PC-9 (cell line): ENCODE measurements at regions of chr22 and their contacts with region 1.

Region 1: DNA sequence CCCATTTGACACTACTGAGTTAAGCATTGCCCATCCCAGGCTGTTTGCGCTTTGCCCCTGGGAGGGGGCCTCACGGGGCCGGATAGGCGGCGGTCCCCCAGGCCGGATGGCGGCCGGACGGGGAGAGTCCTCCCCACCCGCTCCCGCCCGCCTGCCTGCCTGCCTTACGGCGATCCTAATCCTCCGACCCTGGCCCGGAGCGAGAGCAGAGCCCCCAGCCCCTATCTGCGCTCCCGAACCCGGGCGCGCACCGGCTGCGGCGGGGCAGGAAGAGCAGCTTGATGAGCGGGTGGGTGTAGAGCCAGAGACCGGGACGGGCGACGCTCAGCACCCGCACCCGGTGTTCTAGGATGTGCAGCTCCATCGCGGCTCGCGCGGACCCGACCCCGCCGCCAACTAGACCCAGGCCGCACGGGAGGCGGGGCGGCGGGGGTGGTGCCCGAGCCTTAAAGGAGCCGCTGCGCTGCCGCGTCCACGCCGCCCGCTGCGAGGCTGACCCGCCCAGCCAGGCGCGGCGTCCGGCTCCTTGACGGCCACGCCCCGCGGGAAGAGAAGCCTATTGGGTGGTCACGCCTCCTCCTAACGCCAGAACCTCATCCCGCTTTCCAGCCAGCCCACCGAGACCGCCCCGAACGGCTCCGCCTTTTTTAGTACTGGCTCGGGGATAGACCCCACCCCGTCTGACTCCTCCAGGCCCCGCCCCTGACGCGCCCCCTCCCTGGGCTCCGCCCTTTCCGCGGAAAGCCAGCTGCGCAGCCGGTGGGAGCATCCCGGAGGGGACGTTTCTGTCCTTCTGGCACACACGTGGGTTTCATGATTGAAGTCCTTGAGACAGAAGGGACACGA is at the start of gene CASTOR1:
- DNase-seq: peak; percentile 85 to 94
- H3K4me3 ChIP-seq: peak within 1 kb of the TSS; percentile 87
- H3K27ac ChIP-seq: peak within 1 kb of the TSS; percentile 44
- H3K4me1 ChIP-seq: peaks cover 32% of the 10 kb centered on the region
- H3K27me3 ChIP-seq: no peaks in the 10 kb centered on the region
- CTCF ChIP-seq: no peak
- total RNA-seq, gene CASTOR1: 10.6 and 11.1 TPM in 2 replicates

Region 2: GRCh38 chr22:30310881-30311771 is 21.8 kb after region 1 on chr22:
- CTCF ChIA-PET with region 1: interaction called, 4 read pairs
- POLR2A ChIA-PET with region 1: interaction called, 6 read pairs
- intact Hi-C with region 1: loop called (anchors 2 kb)
- DNase-seq: peak; percentile 67 to 68
- H3K4me3 ChIP-seq: peak overlapping the region; percentile 30; the same call in 1 of the 2 replicates
- H3K27ac ChIP-seq: peak overlapping the region; percentile 76
- H3K4me1 ChIP-seq: peaks cover 93% of the 10 kb centered on the region
- H3K27me3 ChIP-seq: no peaks in the 10 kb centered on the region
- CTCF ChIP-seq: no peak

Region 3: GRCh38 chr22:30356449-30357235 is 67.3 kb after region 1 on chr22 and contains the starts of genes CCDC157 and SF3A1:
- CTCF ChIA-PET with region 1: interaction called, 5 read pairs
- POLR2A ChIA-PET with region 1: interaction called, 7 read pairs
- intact Hi-C with region 1: loop called (anchors 2 kb)
- DNase-seq: peak; percentile 80 to 84
- H3K4me3 ChIP-seq: peak within 1 kb of the TSS; percentile 90
- H3K27ac ChIP-seq: peak within 1 kb of the TSS; percentile 74
- H3K4me1 ChIP-seq: peaks cover 18% of the 10 kb centered on the region
- H3K27me3 ChIP-seq: no peaks in the 10 kb centered on the region
- CTCF ChIP-seq: no peak; the same call in 1 of the 2 replicates
- total RNA-seq, gene CCDC157: 6.2 and 6.8 TPM in 2 replicates
- total RNA-seq, gene SF3A1: 189 and 207 TPM in 2 replicates

Region 4: DNA sequence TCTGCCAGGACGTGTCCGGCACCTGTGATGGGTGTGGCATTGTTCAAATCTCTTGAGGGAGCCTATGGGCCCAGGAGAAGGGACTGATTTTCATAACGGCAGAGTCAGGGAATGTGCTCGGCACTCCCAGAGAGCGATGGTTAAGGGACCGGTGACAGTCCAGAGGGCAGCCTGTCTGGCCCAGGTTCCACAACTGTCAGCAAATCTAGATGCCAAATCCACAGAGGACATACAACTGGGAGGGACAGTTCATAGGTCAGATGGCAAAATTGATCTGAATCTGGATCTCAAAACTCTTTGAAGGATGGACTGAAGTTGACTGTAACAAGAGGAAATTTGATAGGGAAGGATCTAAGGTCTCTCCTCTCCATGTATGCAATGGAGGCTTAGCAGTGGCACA is 115.0 kb after region 1 on chr22:
- CTCF ChIA-PET with region 1: no interaction called
- POLR2A ChIA-PET with region 1: no interaction called
- intact Hi-C with region 1: no loop called
- DNase-seq: no peak
- H3K4me3 ChIP-seq: no peak overlapping the region
- H3K27ac ChIP-seq: no peak overlapping the region
- H3K4me1 ChIP-seq: peaks cover 24% of the 10 kb centered on the region
- H3K27me3 ChIP-seq: no peaks in the 10 kb centered on the region
- CTCF ChIP-seq: no peak

Region 5: DNA sequence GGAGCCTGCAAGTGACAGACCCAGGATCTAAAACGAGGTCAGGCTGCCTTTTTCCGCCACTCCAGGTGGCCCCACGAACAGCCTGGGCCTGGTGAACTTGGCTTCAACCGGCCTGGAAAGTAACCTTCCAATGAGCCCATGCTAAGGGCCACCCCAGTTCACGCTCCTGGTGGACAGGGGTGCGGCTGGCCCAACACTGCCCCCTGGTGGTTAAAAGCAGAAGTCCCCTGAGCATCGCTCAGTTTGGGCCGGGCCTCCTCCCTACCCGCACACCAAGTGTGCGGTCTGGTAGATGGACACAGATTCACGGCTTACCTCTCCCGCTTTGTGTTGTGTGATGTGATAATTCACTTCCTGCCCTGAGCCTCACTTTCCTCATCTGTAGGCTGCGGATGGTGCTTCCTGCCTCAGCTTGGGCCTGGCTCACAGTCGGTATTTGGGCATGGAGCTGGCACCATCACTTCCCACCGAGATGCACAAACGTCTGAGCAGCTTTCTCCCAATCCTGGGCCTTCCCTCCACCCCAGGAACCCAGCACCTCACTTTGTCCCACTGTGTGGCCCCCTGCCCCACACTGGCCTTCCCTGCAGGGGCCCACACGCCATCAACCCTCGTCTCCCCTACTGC is 196.1 kb after region 1 on chr22:
- CTCF ChIA-PET with region 1: no interaction called
- POLR2A ChIA-PET with region 1: no interaction called
- intact Hi-C with region 1: loop called (anchors 2 kb)
- DNase-seq: peak; percentile 49 to 69
- H3K4me3 ChIP-seq: no peak overlapping the region
- H3K27ac ChIP-seq: no peak overlapping the region
- H3K4me1 ChIP-seq: no peaks in the 10 kb centered on the region
- H3K27me3 ChIP-seq: no peaks in the 10 kb centered on the region
- CTCF ChIP-seq: peak; percentile 99